AG04450 (cell line): ENCODE measurements at regions of chr15 and their contacts with region 1.

Region 1: GRCh38 chr15:61834076-61834697 is 226.1 kb downstream of the VPS13C start:
- DNase-seq: peak; percentile 47
- H3K4me3 ChIP-seq: no peak overlapping the region
- H3K27ac ChIP-seq: no peak overlapping the region
- H3K27me3 ChIP-seq: peaks cover 8% of the 10 kb centered on the region
- CTCF ChIP-seq: peak; percentile 95

Region 2: GRCh38 chr15:60507596-60508424 is 1326.4 kb before region 1 on chr15:
- CTCF ChIA-PET with region 1: interaction called, 20 read pairs
- POLR2A ChIA-PET with region 1: no interaction called
- DNase-seq: peak; percentile 38
- H3K4me3 ChIP-seq: no peak overlapping the region
- H3K27ac ChIP-seq: no peak overlapping the region
- H3K27me3 ChIP-seq: no peaks in the 10 kb centered on the region
- CTCF ChIP-seq: peak; percentile 98

Region 3: GRCh38 chr15:61169904-61170695 is 664.1 kb before region 1 on chr15:
- CTCF ChIA-PET with region 1: interaction called, 36 read pairs
- POLR2A ChIA-PET with region 1: no interaction called
- DNase-seq: no peak
- H3K4me3 ChIP-seq: no peak overlapping the region
- H3K27ac ChIP-seq: no peak overlapping the region
- H3K27me3 ChIP-seq: no peaks in the 10 kb centered on the region
- CTCF ChIP-seq: no peak

Region 4: GRCh38 chr15:61195116-61196002 is 638.8 kb before region 1 on chr15:
- CTCF ChIA-PET with region 1: interaction called, 15 read pairs
- POLR2A ChIA-PET with region 1: no interaction called
- DNase-seq: no peak
- H3K4me3 ChIP-seq: no peak overlapping the region
- H3K27ac ChIP-seq: no peak overlapping the region
- H3K27me3 ChIP-seq: no peaks in the 10 kb centered on the region
- CTCF ChIP-seq: peak; percentile 74

Region 5: DNA sequence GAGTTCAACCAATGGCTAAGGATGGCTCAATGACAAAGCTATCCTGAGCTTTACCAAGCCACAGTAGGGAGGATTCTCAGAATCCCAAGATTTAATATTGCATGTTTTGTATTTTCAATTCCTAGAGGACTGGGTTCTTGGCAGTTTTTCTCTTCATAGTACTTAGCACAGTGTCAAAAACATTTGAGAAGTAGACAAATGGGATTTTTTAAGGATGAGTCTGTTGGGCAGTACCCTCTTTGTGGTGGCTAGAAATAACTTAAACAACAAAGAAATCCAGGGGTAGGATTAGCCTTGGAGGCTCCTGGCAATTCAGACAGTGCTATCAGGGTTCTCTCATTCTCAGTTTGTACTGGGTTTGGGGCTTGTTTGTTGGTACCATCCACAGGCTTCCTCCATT is 392.3 kb before region 1 on chr15:
- CTCF ChIA-PET with region 1: no interaction called
- POLR2A ChIA-PET with region 1: no interaction called
- DNase-seq: no peak
- H3K4me3 ChIP-seq: no peak overlapping the region
- H3K27ac ChIP-seq: no peak overlapping the region
- H3K27me3 ChIP-seq: no peaks in the 10 kb centered on the region
- CTCF ChIP-seq: no peak

Region 6: GRCh38 chr15:61798631-61799030 is 35.6 kb before region 1 on chr15:
- CTCF ChIA-PET with region 1: interaction called, 10 read pairs
- POLR2A ChIA-PET with region 1: no interaction called
- DNase-seq: no peak
- H3K4me3 ChIP-seq: no peak overlapping the region
- H3K27ac ChIP-seq: no peak overlapping the region
- H3K27me3 ChIP-seq: no peaks in the 10 kb centered on the region
- CTCF ChIP-seq: no peak

Region 7: DNA sequence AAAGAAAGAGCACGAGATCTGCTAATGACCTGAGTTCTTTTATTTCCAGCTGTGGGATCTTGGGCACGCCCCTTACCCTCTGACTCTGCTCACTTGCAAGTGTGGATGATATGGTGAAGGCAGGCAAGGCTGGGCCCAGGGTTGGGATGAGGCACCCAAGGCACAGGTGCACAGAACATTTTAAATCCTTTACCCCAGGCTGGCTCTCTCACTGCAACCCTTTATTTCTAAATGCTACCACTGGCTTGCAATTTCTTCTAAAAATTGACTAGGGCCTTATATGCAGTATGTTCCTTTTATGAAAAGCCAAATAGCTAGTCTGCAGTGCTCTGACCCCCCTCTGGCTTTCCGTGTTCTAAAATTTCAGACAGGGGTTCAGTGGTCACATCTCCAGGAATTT is 11.7 kb before region 1 on chr15:
- CTCF ChIA-PET with region 1: interaction called, 22 read pairs
- POLR2A ChIA-PET with region 1: interaction called, 3 read pairs
- DNase-seq: no peak
- H3K4me3 ChIP-seq: no peak overlapping the region
- H3K27ac ChIP-seq: no peak overlapping the region
- H3K27me3 ChIP-seq: peaks cover 3% of the 10 kb centered on the region
- CTCF ChIP-seq: no peak

Region 8: DNA sequence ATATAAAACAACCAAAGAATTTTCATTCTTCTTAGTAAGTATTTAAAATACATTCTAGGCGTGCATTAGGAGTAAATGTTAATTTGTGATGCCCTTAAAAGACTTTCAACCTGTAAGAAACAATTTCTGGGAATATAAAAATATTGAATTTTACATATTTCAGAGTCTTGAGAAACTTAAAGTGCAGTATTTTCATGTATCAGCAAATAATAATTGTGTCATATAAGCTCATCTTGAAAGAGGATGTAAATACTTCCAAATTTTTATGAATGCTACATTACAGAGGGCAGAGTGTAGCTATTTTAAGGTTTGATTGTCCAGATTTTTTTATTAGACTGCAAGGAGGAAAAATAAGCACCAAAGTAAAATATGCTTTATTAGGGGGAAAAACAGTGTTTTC is 19.0 kb after region 1 on chr15:
- CTCF ChIA-PET with region 1: interaction called, 14 read pairs
- POLR2A ChIA-PET with region 1: no interaction called
- DNase-seq: no peak
- H3K4me3 ChIP-seq: no peak overlapping the region
- H3K27ac ChIP-seq: no peak overlapping the region
- H3K27me3 ChIP-seq: no peaks in the 10 kb centered on the region
- CTCF ChIP-seq: no peak